ENCODE measurements at regions of chr1 and their contacts with region 1.

Region 1: GRCh38 chr1:180515864-180516388 is 13.5 kb upstream of the ACBD6 start:
- DNase-seq: peak; percentile 72
- ATAC-seq: peak; percentile 88
- H3K4me3 ChIP-seq: no peak overlapping the region
- H3K4me3 Mint-ChIP-seq: no peak overlapping the region
- H3K27ac ChIP-seq: no peak overlapping the region
- H3K27ac Mint-ChIP-seq: no peak overlapping the region
- H3K4me1 ChIP-seq: no peaks in the 10 kb centered on the region
- H3K4me1 Mint-ChIP-seq: peaks cover 2% of the 10 kb centered on the region
- H3K27me3 ChIP-seq: peaks cover 0 to 10% (median 0%) of the 10 kb centered on the region in 4 experiments
- H3K27me3 Mint-ChIP-seq: peaks cover 20% of the 10 kb centered on the region
- CTCF ChIP-seq: peak; percentile 94

Region 2: DNA sequence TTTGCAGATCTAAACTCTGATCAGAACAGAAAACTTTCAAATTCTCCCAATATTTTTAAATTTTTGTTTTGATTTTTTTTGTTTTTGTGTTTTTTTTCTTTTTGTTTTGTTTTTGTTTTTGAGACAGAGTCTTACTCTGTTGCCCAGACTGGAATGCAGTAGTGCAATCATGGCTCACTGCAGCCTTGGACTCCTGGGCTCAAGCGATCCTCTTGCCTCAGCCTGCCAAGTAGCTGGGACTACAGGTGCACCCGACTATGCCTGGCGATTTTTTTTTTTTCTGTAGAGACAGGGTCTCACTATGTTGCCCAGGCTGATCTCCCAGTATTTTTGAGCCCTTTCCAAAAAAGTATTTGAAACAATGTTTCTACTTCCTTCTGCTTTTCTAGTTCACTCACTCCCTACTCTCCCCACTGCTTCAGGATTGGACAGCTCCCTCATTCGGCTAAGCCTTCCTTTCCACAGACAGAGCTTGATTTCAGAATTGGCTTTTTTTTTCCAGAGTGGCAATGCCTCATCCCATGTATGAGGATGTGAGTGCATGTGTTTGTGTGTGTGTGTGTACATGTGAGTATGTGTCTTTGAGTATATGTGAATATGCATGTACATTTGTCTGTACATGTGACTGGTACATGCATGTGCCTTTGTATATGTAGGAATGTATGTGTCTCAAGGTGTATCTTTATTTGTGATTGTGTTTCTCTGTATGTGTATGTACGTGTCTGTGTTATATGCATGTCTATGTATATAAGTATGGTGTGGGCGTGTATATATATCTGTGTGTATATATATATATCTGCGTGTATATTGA is 274.0 kb before region 1 on chr1:
- CTCF ChIA-PET with region 1: no interaction called
- POLR2A ChIA-PET with region 1: no interaction called
- intact Hi-C with region 1: no loop called
- DNase-seq: no peak
- ATAC-seq: no peak
- H3K4me3 ChIP-seq: no peak overlapping the region
- H3K4me3 Mint-ChIP-seq: no peak overlapping the region
- H3K27ac ChIP-seq: no peak overlapping the region
- H3K27ac Mint-ChIP-seq: no peak overlapping the region
- H3K4me1 ChIP-seq: peaks cover 0 to 1% of the 10 kb centered on the region in 2 donors
- H3K4me1 Mint-ChIP-seq: no peaks in the 10 kb centered on the region
- H3K27me3 ChIP-seq: peaks cover 0 to 57% (median 43%) of the 10 kb centered on the region in 4 experiments
- H3K27me3 Mint-ChIP-seq: peaks cover 69% of the 10 kb centered on the region
- CTCF ChIP-seq: no peak

Region 3: GRCh38 chr1:180533266-180533987 is 17.5 kb after region 1 on chr1:
- CTCF ChIA-PET with region 1: interaction called, 55 read pairs
- POLR2A ChIA-PET with region 1: no interaction called
- intact Hi-C with region 1: no loop called
- DNase-seq: peak; percentile 68
- ATAC-seq: no peak
- H3K4me3 ChIP-seq: no peak overlapping the region
- H3K4me3 Mint-ChIP-seq: no peak overlapping the region
- H3K27ac ChIP-seq: no peak overlapping the region
- H3K27ac Mint-ChIP-seq: no peak overlapping the region
- H3K4me1 ChIP-seq: no peaks in the 10 kb centered on the region
- H3K4me1 Mint-ChIP-seq: no peaks in the 10 kb centered on the region
- H3K27me3 ChIP-seq: peaks cover 0 to 4% (median 0%) of the 10 kb centered on the region in 4 experiments
- H3K27me3 Mint-ChIP-seq: peaks cover 6% of the 10 kb centered on the region
- CTCF ChIP-seq: peak; percentile 77

Region 4: GRCh38 chr1:181033799-181034451 is 518.0 kb after region 1 on chr1 and contains the start of gene MR1:
- CTCF ChIA-PET with region 1: no interaction called
- POLR2A ChIA-PET with region 1: no interaction called
- intact Hi-C with region 1: loop called (anchors 1 kb)
- DNase-seq: peak; percentile 92
- ATAC-seq: peak; percentile 97
- H3K4me3 ChIP-seq: peak within 1 kb of the TSS; percentile 77 to 94 (median 90)
- H3K4me3 Mint-ChIP-seq: peak within 1 kb of the TSS; percentile 95
- H3K27ac ChIP-seq: peak within 1 kb of the TSS; percentile 94 to 96
- H3K27ac Mint-ChIP-seq: peak within 1 kb of the TSS; percentile 93
- H3K4me1 ChIP-seq: peaks cover 39 to 49% of the 10 kb centered on the region in 2 donors
- H3K4me1 Mint-ChIP-seq: peaks cover 54% of the 10 kb centered on the region
- H3K27me3 ChIP-seq: no peaks in the 10 kb centered on the region
- H3K27me3 Mint-ChIP-seq: no peaks in the 10 kb centered on the region
- CTCF ChIP-seq: no peak
- total RNA-seq, gene MR1: 26.1 and 28.2 TPM in 2 replicates

Region 5: DNA sequence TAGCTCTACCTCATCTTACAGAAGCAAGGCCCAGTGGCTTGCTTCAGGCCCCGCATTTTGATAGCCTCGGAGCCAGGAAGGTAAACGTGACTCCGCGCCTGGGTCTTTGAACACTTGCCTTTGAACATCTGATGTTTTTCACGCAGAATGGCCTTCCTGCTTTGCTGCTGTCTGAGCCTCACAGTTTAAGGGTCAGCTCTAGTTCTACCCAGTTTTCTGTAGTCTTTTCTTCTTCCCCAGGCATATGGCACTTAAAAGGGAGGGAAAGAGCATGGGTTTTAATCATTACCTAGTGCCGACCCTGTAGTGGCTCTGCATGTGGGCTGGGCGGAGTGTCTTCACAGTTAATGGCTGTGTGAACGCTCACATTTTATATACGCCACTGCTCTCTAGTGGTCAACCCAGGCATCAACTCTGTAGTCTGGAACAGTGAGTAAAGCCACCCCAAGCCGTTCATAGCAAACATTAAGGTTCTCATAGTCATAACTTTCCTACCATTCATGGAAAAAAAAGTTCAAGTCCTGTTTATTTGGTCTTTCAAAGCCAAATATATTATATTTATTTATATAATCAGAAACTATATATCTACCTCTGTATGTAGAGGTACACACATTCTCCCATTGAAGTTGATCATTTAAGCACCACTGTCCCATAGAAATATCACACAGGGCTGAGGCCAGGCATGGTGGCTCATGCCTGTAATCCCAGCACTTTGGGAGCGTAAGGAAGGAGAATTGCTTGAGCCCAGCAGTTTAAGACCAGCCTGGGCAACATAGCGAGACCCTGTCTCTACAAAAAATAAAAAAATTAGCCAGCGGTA is 650.7 kb after region 1 on chr1:
- CTCF ChIA-PET with region 1: interaction called, 23 read pairs
- POLR2A ChIA-PET with region 1: no interaction called
- intact Hi-C with region 1: loop called (anchors 1 kb)
- DNase-seq: peak; percentile 82
- ATAC-seq: peak; percentile 99
- H3K4me3 ChIP-seq: no peak overlapping the region
- H3K4me3 Mint-ChIP-seq: no peak overlapping the region
- H3K27ac ChIP-seq: no peak overlapping the region
- H3K27ac Mint-ChIP-seq: no peak overlapping the region
- H3K4me1 ChIP-seq: peaks cover 2 to 6% of the 10 kb centered on the region in 2 donors
- H3K4me1 Mint-ChIP-seq: peaks cover 3% of the 10 kb centered on the region
- H3K27me3 ChIP-seq: peaks cover 0 to 2% (median 0%) of the 10 kb centered on the region in 4 experiments
- H3K27me3 Mint-ChIP-seq: no peaks in the 10 kb centered on the region
- CTCF ChIP-seq: peak; percentile 94

Measured in B cell (primary cell).